ENCODE measurements at regions of chr13 and their contacts with region 1.

Region 1: DNA sequence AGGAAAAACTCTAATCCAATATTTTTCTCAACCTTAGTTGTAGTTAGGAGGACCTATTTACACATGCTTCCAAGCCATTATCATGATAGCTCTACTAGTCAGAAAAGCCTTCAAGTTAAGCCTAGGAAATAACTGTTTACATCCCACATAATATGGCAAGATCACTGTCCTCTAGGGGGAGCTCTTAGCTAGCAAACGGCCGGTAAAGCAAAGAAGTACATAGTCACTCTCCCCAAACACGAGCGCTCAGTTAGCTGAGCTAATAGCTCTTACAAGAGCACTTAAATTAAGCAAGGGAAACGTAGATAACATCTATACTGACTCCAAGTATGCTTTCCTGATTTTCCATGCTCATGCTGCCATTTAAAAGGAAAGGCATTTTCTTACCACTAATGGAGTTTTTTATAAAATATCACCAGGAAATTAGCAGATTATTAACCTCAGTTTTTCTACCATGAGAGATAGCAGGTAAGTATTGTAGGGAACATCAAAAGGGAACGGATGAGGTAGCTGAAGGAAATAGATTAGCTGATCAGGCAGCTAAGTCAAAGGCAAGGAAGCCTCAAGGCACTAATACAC is 100.6 kb upstream of the PABPC3 start:
- DNase-seq: peak; percentile 77
- ATAC-seq: peak; percentile 98
- H3K4me3 ChIP-seq: no peak overlapping the region
- H3K27ac ChIP-seq: no peak overlapping the region
- H3K4me1 ChIP-seq: no peaks in the 10 kb centered on the region; a peak in 1 of 4 replicates
- H3K27me3 ChIP-seq: no peaks in the 10 kb centered on the region
- CTCF ChIP-seq: peak; percentile 49 to 86 (median 82); a peak in 5 of 6 replicates
- POLR2A ChIP-seq: no peak
- RAD21 ChIP-seq: peak; percentile 62

Region 2: DNA sequence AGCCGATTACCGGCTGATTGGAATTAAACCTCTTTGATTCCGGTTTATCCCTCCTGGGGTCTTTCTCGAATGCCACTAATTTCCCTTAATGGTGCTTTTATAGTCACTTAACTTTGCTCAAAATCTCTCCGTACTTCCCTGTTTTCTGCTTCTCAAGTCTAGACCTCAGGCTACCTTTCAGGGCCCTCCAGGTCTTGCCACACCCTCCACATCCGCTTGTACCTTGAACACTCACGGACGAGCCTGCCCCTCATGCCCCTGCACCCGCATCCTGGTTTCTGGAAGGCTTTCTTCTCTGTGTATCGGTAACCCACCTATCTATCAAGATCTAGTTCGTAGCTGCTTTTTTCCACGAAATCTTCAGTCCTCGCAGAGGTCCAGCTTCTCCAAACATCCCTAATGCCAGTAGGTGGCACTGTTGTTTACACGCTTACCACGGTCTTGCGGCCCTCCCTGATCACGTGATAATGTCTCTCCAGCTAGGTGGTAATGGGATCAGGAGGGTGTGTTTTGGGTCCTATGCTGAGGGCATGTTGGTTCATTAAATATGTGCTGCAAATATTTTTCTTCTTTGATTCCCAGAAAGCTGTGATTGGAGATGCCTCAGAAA is 301.3 kb before region 1 on chr13:
- CTCF ChIA-PET with region 1: interaction called, 28 read pairs
- POLR2A ChIA-PET with region 1: no interaction called
- RAD21 ChIA-PET with region 1: no interaction called
- intact Hi-C with region 1: loop called (anchors 1 kb)
- DNase-seq: peak; percentile 74
- ATAC-seq: peak; percentile 99
- H3K4me3 ChIP-seq: peak overlapping the region in 1 of 2 experiments; percentile 32; a peak in 2 of 4 replicates
- H3K27ac ChIP-seq: no peak overlapping the region
- H3K4me1 ChIP-seq: peaks cover 0 to 4% of the 10 kb centered on the region in 2 experiments; a peak in 3 of 4 replicates
- H3K27me3 ChIP-seq: peaks cover 1% of the 10 kb centered on the region; the same call in 1 of the 2 replicates
- CTCF ChIP-seq: peak; percentile 69 to 88 (median 82)
- POLR2A ChIP-seq: no peak
- RAD21 ChIP-seq: peak; percentile 69

Region 3: GRCh38 chr13:24985109-24985508 is 10.2 kb before region 1 on chr13:
- CTCF ChIA-PET with region 1: interaction called, 18 read pairs
- POLR2A ChIA-PET with region 1: interaction called, 3 read pairs
- RAD21 ChIA-PET with region 1: no interaction called
- intact Hi-C with region 1: no loop called
- DNase-seq: no peak
- ATAC-seq: no peak
- H3K4me3 ChIP-seq: no peak overlapping the region
- H3K27ac ChIP-seq: no peak overlapping the region
- H3K4me1 ChIP-seq: no peaks in the 10 kb centered on the region
- H3K27me3 ChIP-seq: no peaks in the 10 kb centered on the region
- CTCF ChIP-seq: 0 out of 6 replicates have a peak, but pooled peaks of 2 of the 3 experiments have one; percentile 4 to 12
- POLR2A ChIP-seq: no peak
- RAD21 ChIP-seq: no peak; the same call in 1 of the 2 replicates

Region 4: DNA sequence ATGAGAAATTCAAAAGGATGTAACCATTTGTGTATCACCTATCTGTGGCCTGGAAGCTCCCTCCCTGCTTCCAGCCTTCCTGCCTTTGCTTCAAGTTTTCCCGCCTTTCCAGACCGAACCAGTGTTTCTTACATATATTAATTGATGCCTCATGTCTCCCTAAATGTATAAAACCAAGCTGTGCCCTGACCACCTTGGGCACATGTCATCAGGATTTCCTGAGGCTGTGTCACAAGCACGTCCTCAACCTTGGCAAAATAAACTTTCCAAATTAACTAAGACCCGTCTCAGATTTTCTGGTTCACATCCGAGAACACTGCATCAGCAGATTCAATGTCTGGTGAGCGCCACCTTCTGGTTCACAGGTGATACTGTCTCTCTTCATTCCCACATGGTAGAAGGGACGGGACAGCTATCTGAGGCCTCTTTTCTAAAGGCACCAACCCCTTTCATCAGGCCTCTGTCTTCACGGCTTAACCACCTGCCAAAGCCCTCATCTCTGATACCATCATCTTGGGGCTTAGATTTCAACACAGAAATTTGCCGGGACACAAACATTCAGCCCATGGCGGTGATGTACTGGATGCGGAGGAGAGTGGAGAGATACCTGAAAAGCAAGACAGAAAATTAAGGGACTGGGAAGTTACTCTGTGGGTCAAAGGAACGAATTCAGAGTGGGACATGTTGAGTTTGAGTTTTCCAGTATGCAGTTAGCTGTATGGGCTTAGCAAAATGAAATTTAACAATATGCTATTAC is 41.9 kb after region 1 on chr13:
- CTCF ChIA-PET with region 1: interaction called, 11 read pairs
- POLR2A ChIA-PET with region 1: no interaction called
- RAD21 ChIA-PET with region 1: interaction called in 1 of 2 experiments, 4 read pairs
- intact Hi-C with region 1: no loop called
- DNase-seq: peak; percentile 55
- ATAC-seq: peak; percentile 99
- H3K4me3 ChIP-seq: no peak overlapping the region
- H3K27ac ChIP-seq: no peak overlapping the region
- H3K4me1 ChIP-seq: no peaks in the 10 kb centered on the region
- H3K27me3 ChIP-seq: peaks cover 9% of the 10 kb centered on the region; the same call in 1 of the 2 replicates
- CTCF ChIP-seq: peak; percentile 62 to 83 (median 81)
- POLR2A ChIP-seq: no peak
- RAD21 ChIP-seq: peak; percentile 58

Measured in HCT116 (cell line).